ENCODE measurements at regions of chr5 and their contacts with region 1.

Region 1: DNA sequence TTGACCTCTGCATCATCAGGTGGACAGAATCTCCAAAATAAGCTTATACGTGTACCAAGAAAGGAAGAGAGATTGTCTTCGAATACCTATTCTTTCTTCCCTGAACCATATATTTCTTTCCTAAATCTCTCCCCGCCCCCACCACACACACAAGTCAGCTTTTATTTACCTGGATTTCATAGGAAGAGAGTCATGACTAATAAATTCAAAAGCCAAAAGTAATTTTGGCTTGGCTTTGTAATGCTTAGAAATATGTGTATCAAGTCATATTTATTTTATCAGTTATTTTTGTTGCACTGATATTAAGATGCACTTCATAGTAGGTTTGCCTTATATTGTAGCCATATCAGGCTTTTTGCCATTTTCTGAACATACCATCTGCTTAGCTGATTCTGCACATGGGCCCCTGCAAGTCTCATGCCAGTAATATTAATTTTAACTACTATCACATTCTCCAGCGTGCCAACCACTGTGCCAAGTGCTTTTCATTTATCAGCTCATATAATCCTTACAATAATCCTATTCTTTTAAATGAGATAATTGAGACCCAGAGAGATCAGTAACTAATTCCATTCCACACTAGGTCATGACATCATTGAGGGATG is 1405.3 kb upstream of the NUDT12 start:
- DNase-seq: no peak
- H3K4me3 ChIP-seq: no peak overlapping the region
- H3K27ac ChIP-seq: no peak overlapping the region
- H3K4me1 ChIP-seq: no peaks in the 10 kb centered on the region
- H3K27me3 ChIP-seq: no peaks in the 10 kb centered on the region
- CTCF ChIP-seq: no peak

Region 2: GRCh38 chr5:103582364-103582763 is 1385.5 kb before region 1 on chr5:
- CTCF ChIA-PET with region 1: no interaction called
- POLR2A ChIA-PET with region 1: no interaction called
- intact Hi-C with region 1: no loop called
- DNase-seq: peak; percentile 71
- H3K4me3 ChIP-seq: no peak overlapping the region
- H3K27ac ChIP-seq: no peak overlapping the region
- H3K4me1 ChIP-seq: peaks cover 6% of the 10 kb centered on the region
- H3K27me3 ChIP-seq: no peaks in the 10 kb centered on the region
- CTCF ChIP-seq: peak; percentile 69

Region 3: GRCh38 chr5:104913841-104914281 is 54.0 kb before region 1 on chr5:
- CTCF ChIA-PET with region 1: no interaction called
- POLR2A ChIA-PET with region 1: no interaction called
- intact Hi-C with region 1: no loop called
- DNase-seq: no peak
- H3K4me3 ChIP-seq: no peak overlapping the region
- H3K27ac ChIP-seq: no peak overlapping the region
- H3K4me1 ChIP-seq: no peaks in the 10 kb centered on the region
- H3K27me3 ChIP-seq: no peaks in the 10 kb centered on the region
- CTCF ChIP-seq: no peak

Region 4: DNA sequence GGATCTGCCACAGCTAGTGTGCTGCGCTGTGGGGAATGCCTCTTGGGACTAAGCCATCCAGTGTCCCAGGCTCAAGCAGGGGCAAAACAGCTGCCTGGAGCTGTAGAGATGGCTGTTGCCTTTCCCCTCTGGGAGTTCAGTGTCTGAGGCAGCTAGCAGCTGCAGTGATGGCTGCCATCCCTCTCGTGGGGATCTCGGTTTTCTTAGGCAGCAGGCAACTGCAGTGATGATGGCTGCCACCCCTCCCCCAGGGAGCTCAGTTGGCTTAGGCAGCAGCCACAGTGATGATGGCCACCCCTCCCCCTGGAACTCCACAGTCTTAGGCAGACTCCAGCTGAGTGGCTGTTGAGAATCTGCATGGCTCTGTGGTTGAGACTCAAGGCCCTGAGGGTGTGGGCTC is 16.1 kb before region 1 on chr5:
- CTCF ChIA-PET with region 1: no interaction called
- POLR2A ChIA-PET with region 1: interaction called, 12 read pairs
- intact Hi-C with region 1: no loop called
- DNase-seq: no peak
- H3K4me3 ChIP-seq: no peak overlapping the region
- H3K27ac ChIP-seq: no peak overlapping the region
- H3K4me1 ChIP-seq: no peaks in the 10 kb centered on the region
- H3K27me3 ChIP-seq: no peaks in the 10 kb centered on the region
- CTCF ChIP-seq: no peak

Measured in A673 (cell line).